ENCODE measurements at regions of chr3 and their contacts with region 1.

Region 1: DNA sequence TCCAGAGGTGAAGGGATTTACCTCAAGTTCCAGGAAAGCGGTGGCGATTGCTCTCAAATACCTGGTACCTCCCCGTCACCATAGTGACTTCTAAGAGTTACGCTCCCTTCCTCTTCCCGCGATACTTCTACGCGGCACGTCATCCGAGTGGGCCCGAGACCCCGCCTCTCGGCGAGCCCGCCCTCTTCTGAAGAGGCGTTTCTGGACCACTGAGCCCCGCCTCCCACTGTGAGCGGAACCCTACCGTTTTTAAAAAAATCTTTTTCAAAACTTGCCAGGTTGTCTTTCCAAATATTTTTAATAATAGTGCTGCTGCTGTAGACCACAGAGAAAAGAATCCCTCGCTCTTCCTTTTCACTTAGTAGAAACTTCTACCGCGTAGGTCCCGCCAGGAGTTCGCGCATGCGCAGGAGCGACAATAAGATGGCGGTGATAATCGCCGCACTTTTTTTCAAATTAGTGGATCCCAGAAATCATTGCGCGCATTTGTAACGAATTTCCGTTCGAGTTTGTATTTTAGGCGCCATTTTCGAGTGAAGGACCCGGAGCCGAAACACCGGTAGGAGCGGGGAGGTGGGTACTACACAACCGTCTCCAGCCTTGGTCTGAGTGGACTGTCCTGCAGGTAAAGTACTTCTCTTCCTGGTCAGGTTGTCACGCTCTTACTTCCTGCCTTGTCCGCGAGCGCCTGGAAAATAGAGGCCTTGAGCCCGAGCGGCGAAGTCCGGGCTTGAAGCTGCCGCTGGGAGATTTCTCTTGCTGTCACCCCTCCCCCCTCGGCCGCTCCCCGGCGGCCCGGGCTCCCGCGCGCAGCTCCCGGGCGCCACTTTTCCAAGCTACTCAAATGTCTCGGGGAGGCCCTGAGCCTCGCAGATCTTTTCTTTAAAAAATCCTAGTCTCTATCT is at the starts of genes IFT80 and SMC4:
- DNase-seq: peak; percentile 90
- ATAC-seq: peak; percentile 95
- H3K4me3 Mint-ChIP-seq: peak within 1 kb of the TSS; percentile 97
- H3K27ac Mint-ChIP-seq: peak within 1 kb of the TSS; percentile 99
- H3K4me1 Mint-ChIP-seq: peaks cover 47% of the 10 kb centered on the region
- H3K27me3 Mint-ChIP-seq: peaks cover 2% of the 10 kb centered on the region
- CTCF ChIP-seq: no peak
- total RNA-seq, gene IFT80: 20.8 and 26.7 TPM in 2 replicates
- total RNA-seq, gene SMC4: 35.2 and 40.4 TPM in 2 replicates

Region 2: DNA sequence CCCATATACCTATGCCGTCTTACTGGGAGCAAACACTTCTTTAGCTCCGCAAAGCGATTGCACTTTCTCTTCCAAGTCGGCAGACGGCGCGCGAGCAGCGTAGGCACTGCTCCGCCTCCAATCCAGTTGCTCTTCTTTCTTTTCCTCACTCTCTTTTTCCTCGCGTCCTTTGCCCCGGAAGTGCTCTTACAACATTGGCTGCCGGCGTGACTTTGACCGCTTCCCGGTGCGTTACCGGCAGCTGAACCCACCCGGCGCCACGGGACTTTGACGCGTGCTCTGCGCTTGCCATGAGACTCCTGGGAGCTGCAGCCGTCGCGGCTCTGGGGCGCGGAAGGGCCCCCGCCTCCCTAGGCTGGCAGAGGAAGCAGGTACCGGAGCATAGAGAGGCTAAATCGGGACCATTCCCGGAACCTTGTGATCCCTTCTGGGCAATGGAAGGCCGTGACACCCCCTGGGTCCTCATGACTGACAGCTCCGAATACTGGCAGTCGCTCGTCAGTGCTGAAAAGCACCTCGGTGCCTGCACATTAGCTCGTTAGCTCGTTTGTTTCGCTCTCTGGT is 1755.0 kb before region 1 on chr3 and contains the start of gene GFM1:
- CTCF ChIA-PET with region 1: no interaction called
- POLR2A ChIA-PET with region 1: no interaction called
- intact Hi-C with region 1: loop called (anchors 2 kb)
- DNase-seq: peak; percentile 75
- ATAC-seq: peak; percentile 96
- H3K4me3 Mint-ChIP-seq: peak within 1 kb of the TSS; percentile 99
- H3K27ac Mint-ChIP-seq: peak within 1 kb of the TSS; percentile 90
- H3K4me1 Mint-ChIP-seq: peaks cover 24% of the 10 kb centered on the region
- H3K27me3 Mint-ChIP-seq: no peaks in the 10 kb centered on the region
- CTCF ChIP-seq: peak; percentile 46
- total RNA-seq, gene GFM1: 46.8 and 56.4 TPM in 2 replicates

Region 3: DNA sequence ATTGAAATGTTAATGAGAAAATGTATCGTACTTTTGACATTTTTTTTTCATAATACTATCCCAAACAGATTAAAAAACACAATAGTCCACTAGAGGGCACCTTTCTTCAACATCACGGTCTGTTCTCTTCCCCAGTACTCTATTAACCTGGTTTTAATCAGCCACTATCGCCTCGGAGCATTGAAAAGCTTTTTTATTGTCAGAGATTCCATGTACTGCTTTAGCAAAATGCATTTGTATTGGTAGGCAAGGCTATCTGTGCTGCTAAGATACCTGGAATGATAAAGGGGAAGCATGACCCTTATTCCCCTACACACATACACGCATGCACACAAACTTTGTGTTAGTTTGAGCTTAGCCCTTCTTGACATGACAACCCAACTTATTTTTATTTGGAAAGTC is 570.8 kb before region 1 on chr3:
- CTCF ChIA-PET with region 1: no interaction called
- POLR2A ChIA-PET with region 1: no interaction called
- intact Hi-C with region 1: loop called (anchors 5 kb)
- DNase-seq: no peak
- ATAC-seq: peak; percentile 31
- H3K4me3 Mint-ChIP-seq: no peak overlapping the region
- H3K27ac Mint-ChIP-seq: no peak overlapping the region
- H3K4me1 Mint-ChIP-seq: peaks cover 4% of the 10 kb centered on the region
- H3K27me3 Mint-ChIP-seq: no peaks in the 10 kb centered on the region
- CTCF ChIP-seq: no peak

Region 4: DNA sequence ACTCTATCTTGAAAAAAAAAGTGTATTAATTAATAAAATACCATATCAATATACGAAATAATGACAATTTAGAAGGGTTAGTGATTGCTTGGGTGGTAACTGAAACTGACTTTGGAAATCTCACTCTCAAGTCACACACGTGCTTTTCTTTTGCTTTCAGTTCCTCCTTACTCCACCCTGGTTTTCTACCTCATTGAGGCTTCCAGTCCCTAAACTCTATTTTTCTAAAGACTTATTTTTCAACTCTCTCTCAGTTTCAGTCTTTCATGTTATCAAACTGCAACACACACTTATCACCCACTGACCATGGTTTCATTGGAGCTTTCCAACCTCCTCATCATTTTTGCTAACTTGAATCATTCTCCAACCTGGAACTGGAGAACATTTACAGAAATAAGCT is 387.3 kb before region 1 on chr3:
- CTCF ChIA-PET with region 1: no interaction called
- POLR2A ChIA-PET with region 1: no interaction called
- intact Hi-C with region 1: loop called (anchors 2 kb)
- DNase-seq: no peak
- ATAC-seq: peak; percentile 88
- H3K4me3 Mint-ChIP-seq: peak overlapping the region; percentile 25
- H3K27ac Mint-ChIP-seq: peak overlapping the region; percentile 83
- H3K4me1 Mint-ChIP-seq: peaks cover 42% of the 10 kb centered on the region
- H3K27me3 Mint-ChIP-seq: no peaks in the 10 kb centered on the region
- CTCF ChIP-seq: no peak

Region 5: GRCh38 chr3:160355826-160356225 is 43.6 kb before region 1 on chr3:
- CTCF ChIA-PET with region 1: no interaction called
- POLR2A ChIA-PET with region 1: no interaction called
- intact Hi-C with region 1: no loop called
- DNase-seq: no peak
- ATAC-seq: no peak
- H3K4me3 Mint-ChIP-seq: no peak overlapping the region
- H3K27ac Mint-ChIP-seq: no peak overlapping the region
- H3K4me1 Mint-ChIP-seq: no peaks in the 10 kb centered on the region
- H3K27me3 Mint-ChIP-seq: no peaks in the 10 kb centered on the region
- CTCF ChIP-seq: no peak

Region 6: DNA sequence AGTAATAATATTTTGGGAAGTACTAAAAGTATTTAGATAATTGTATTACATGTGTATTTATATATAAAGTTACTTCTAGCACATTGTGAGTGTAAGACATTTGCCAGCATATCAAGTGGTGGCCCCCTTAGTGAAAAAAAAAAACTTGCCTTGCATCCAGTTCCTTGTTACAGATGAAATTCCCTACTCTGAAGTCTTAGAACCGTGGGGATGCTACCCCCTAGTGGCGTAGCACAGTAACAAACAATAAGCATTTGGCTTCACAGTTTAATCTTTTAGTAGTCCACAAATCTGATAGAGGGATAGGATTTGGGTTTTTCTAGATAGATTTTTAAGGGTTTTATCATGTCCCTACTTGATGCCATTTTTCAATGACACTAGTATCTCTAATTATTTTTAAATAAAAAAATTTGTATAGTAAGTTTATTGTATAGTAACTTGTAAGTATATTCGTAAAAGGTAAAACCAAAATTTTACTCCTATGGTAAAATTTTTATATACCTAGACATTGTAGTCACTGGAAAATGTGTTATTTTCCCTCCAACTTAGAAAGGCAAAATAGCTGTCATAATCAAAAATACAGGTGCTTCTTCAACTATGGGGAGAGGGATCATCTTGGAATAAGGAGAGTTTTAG is 14.4 kb after region 1 on chr3:
- CTCF ChIA-PET with region 1: interaction called, 6 read pairs
- POLR2A ChIA-PET with region 1: no interaction called
- intact Hi-C with region 1: loop called (anchors 1 kb)
- DNase-seq: peak; percentile 19
- ATAC-seq: peak; percentile 90
- H3K4me3 Mint-ChIP-seq: no peak overlapping the region
- H3K27ac Mint-ChIP-seq: no peak overlapping the region
- H3K4me1 Mint-ChIP-seq: peaks cover 1% of the 10 kb centered on the region
- H3K27me3 Mint-ChIP-seq: no peaks in the 10 kb centered on the region
- CTCF ChIP-seq: peak; percentile 98

Region 7: GRCh38 chr3:161069511-161070263 is 670.3 kb after region 1 on chr3:
- CTCF ChIA-PET with region 1: no interaction called
- POLR2A ChIA-PET with region 1: no interaction called
- intact Hi-C with region 1: loop called (anchors 1 kb)
- DNase-seq: no peak
- ATAC-seq: peak; percentile 91
- H3K4me3 Mint-ChIP-seq: peak overlapping the region; percentile 51
- H3K27ac Mint-ChIP-seq: peak overlapping the region; percentile 82
- H3K4me1 Mint-ChIP-seq: peaks cover 48% of the 10 kb centered on the region
- H3K27me3 Mint-ChIP-seq: no peaks in the 10 kb centered on the region
- CTCF ChIP-seq: no peak

Measured in activated B cell treated with CpG ODN at 0.5 μM for 24 hours (primary cell).